Activated CD8-positive, alpha-beta T cell treated with anti-CD3 and anti-CD28 coated beads, Interleukin-2, amount 10 ng/mL, durations not matched to agents 7 days and 5 days (primary cell): ENCODE measurements at regions of chr4 and their contacts with region 1.

Region 1: DNA sequence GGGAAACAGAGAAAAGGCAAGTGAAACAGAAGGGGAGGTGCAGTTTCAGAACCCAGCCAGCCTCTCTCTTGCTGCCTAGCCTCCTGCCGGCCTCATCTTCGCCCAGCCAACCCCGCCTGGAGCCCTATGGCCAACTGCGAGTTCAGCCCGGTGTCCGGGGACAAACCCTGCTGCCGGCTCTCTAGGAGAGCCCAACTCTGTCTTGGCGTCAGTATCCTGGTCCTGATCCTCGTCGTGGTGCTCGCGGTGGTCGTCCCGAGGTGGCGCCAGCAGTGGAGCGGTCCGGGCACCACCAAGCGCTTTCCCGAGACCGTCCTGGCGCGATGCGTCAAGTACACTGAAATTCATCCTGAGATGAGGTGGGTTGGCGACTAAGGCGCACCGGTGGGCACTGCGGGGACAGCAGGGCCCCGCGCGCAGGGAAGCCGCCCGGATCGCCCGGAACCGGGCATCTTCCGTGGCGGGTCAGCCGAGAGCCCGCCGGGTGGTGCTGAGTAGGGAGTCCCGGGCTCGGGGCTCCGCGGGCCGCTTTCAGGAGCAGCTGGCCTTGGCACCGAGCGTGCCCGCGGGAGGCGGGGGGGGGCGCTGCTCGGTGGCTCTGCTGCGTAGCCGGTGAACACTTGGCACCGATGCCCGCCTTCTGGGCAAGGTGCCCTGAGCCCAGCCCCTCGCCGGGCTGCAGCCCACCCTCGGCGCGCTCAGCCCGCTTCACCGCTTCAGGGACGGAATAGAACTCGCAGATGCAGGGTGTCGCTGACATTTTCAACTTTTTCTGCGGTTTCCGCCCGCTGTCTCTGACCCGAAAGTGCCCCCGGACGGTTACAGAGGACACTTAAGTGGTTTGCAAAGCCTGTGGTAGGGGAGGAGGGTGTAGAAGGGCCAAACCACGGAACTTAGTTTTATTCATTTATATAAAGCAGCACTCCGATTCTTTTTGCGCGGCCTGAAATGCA is at the start of gene CD38:
- DNase-seq: peak; percentile 82
- ATAC-seq: peak; percentile 75
- H3K4me3 Mint-ChIP-seq: peak within 1 kb of the TSS; percentile 86
- H3K27ac Mint-ChIP-seq: peak within 1 kb of the TSS; percentile 88
- H3K4me1 Mint-ChIP-seq: peaks cover 76% of the 10 kb centered on the region
- H3K27me3 Mint-ChIP-seq: peaks cover 3% of the 10 kb centered on the region
- total RNA-seq, gene CD38: 88.8 to 93.4 TPM

Region 2: DNA sequence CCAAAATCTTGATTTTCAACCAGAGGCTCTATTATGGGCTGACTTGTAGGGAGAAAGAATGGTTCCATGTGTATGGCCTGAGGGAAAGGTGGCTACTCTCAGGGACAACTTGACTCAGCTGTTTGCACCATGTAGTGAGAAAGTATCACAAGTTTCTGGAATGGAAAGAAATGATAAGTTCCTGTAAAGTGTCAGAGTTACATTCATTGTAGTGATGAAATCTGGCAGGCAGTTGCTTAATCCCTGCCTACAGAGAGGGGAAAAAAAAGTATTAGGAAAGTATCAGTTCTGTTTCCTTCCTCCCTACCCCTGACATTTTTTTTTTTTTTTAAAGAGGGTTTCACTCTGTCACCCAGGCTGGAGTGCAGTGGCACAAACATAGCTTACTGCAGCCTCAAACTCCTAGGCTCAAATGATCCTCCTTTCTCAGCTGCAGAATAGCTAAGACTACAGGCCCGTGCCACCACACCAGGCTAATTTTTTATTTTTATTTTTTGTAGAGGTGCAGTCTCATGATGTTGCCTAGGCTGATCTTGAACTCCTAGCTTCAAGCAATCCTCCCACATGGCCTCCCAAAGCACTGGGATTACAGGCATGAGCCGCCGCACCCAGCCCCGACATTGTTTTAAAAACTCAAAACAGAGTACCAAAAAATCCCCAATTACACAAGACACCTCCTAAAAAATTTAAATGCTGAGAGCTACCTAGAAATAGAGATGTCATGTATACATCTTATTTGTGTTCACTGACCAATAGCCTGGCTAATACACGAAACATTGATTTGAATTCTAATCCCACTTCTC is 118.6 kb before region 1 on chr4:
- CTCF ChIA-PET with region 1: no interaction called
- POLR2A ChIA-PET with region 1: no interaction called
- DNase-seq: no peak
- ATAC-seq: no peak
- H3K4me3 Mint-ChIP-seq: no peak overlapping the region
- H3K27ac Mint-ChIP-seq: no peak overlapping the region
- H3K4me1 Mint-ChIP-seq: peaks cover 14% of the 10 kb centered on the region
- H3K27me3 Mint-ChIP-seq: no peaks in the 10 kb centered on the region

Region 3: DNA sequence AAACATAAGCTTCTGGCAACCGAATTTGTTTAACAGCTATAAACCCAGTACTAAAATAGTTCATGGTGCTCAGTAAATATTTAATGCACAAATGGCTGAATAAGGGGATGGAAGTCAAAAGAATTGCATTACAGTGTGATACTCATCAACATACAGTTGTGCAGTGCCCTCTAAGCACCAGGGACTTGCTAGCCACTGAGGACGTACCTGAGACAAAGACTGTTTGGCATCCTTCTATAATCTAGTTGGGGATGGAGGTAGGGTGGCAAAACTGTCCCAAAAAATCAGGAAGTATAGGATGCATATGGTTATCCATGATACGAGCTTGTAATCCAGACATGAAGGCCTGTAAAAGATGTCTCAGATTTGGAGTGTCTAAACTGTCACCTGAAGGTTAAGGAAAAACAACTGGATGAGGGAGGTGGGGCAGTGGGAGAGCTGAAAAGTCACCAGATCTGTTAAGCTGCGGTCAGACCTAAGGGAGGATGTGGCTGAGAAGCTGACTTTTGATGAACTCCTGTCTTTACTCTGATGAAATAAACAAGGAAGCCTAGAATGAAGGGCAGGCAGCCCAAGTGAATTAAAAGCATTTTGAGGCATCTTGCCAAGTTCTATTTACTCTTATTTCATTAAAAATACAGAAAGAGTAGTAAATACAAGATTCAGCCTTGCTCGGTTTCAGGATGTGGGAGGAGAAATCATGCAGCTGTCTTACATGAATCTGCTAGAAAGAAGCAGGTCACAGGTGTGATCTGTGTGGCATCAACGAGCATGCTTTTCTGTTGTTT is 12.5 kb before region 1 on chr4:
- CTCF ChIA-PET with region 1: interaction called, 21 read pairs
- POLR2A ChIA-PET with region 1: interaction called, 38 read pairs
- DNase-seq: peak; percentile 79
- ATAC-seq: peak; percentile 81
- H3K4me3 Mint-ChIP-seq: peak overlapping the region; percentile 51
- H3K27ac Mint-ChIP-seq: peak overlapping the region; percentile 88
- H3K4me1 Mint-ChIP-seq: peaks cover 78% of the 10 kb centered on the region
- H3K27me3 Mint-ChIP-seq: no peaks in the 10 kb centered on the region

Region 4: DNA sequence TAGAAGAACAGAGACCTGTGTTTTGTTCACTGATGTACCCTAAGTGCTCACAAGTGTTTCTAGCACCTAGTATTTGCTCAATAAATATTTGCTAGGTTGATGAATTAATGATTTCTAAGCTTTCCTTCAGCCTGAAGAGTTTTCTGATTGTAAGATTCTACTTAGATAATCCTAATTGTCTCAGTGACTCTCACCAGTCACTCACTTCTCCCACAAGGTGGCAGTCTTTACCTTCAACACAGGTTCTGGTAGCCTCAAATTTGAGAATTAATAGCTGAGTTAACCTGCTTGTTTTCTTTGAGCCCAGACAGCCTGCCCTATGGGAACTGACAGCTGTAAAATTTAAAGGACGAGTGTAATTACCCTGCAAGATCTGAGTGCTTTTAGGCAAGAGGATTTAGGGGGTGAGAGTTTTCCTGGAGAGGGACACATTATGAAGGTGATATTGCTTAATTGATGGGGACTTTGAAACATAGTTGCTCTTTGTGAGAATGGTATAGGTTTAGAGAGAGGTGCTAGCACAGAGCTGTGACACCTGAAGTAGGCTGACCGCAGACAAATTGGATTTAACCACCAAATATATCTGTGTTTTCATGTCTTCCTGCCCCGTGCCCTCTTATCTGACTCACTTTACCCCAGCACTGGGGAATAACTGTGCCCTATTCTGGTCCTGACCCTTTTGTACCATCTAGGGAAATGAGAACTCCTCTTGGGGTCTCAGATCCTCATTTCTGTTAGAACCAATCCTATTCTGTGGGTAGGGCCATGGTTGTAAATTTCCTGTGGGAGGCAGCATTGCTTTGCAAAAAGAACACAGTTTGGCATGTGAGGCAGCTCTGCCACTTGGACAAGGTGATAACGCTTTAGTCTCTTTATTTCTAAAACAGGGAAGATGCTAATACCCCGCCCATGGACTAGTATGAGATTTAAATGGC is 27.3 kb after region 1 on chr4:
- CTCF ChIA-PET with region 1: interaction called, 17 read pairs
- POLR2A ChIA-PET with region 1: no interaction called
- DNase-seq: peak; percentile 63
- ATAC-seq: peak; percentile 64
- H3K4me3 Mint-ChIP-seq: no peak overlapping the region
- H3K27ac Mint-ChIP-seq: peak overlapping the region; percentile 21
- H3K4me1 Mint-ChIP-seq: peaks cover 65% of the 10 kb centered on the region
- H3K27me3 Mint-ChIP-seq: no peaks in the 10 kb centered on the region